Transverse colon (tissue), 4 donors: ENCODE measurements at regions of chr1 and their contacts with region 1.

Region 1: DNA sequence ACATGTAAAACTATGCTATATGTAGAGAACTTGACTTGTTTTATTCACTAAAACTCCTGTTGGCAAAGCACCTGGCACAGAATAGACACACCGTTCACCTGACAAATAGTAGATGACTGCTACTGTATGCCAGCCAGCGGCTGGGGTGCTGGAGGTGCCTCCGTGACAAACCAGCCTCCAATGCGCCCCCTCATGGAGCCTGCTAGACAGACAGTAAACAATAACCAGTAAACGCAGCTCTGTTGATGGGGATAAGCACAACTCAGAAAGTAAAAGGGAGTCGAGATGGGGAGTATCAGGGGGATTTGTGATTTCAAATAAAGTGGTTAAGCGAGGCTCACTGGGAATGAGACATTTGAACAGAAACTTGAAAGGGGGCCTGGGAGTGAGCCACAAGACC is 107.2 kb downstream of the PRDM2 start:
- DNase-seq: peak; percentile 52
- H3K4me3 ChIP-seq: no peak overlapping the region
- H3K27ac ChIP-seq: no peak overlapping the region
- H3K4me1 ChIP-seq: peaks cover 0 to 8% (median 0%) of the 10 kb centered on the region in 4 donors
- H3K27me3 ChIP-seq: no peaks in the 10 kb centered on the region
- CTCF ChIP-seq: peak in 4 of 5 experiments; percentile 6 to 30 (median 22)
- EP300 ChIP-seq: no peak
- POLR2A ChIP-seq: no peak

Region 2: DNA sequence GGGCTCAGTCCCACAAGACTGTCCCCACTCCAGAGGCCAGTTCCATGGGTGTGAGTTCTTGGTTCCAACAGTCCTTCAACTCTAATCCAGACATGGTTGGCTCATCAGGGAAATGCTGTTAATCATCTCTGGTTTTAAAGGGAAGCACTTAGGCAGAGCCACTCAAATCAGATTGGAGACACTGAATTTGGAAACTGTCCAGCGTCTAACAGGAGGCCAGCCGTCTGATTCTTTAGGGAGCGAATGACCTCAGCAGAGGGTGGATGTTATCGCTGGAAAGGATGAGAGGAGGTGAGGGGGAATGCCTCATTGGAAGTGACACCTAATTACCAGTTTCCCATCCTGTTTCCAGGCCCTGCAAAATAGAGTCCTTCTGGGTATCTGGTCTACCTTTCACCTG is 270.6 kb before region 1 on chr1:
- in situ Hi-C with region 1: no loop called
- intact Hi-C with region 1: no loop called
- DNase-seq: no peak
- H3K4me3 ChIP-seq: no peak overlapping the region
- H3K27ac ChIP-seq: no peak overlapping the region
- H3K4me1 ChIP-seq: no peaks in the 10 kb centered on the region
- H3K27me3 ChIP-seq: no peaks in the 10 kb centered on the region
- CTCF ChIP-seq: no peak
- EP300 ChIP-seq: no peak
- POLR2A ChIP-seq: no peak

Region 3: DNA sequence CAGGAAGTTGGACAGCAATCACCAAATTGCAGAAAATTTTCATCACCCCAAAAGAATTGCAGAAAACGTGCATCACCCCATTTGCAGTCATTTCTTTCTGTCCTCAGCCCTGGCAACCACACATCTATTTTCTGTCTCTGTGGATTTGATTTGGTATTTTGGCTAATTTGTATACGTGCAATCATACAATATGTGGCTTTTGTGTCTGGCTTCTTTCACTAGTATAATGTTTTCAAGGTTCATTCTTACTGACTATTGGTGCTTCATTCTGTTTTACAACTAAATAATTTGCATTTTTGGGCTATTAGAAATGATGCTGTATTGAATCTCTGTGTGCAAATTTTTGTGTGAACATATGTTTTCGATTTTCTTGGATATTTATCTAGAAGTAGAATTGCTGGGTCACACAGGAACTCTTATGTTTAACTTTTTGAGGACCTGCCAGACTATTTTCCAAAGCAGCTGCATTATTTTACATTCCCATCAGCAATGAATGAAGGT is 132.0 kb before region 1 on chr1:
- in situ Hi-C with region 1: loop called in 2 of 4 experiments (anchors 10 to 25 kb)
- intact Hi-C with region 1: no loop called
- DNase-seq: no peak
- H3K4me3 ChIP-seq: no peak overlapping the region
- H3K27ac ChIP-seq: no peak overlapping the region
- H3K4me1 ChIP-seq: no peaks in the 10 kb centered on the region
- H3K27me3 ChIP-seq: peaks cover 16% of the 10 kb centered on the region
- CTCF ChIP-seq: no peak
- EP300 ChIP-seq: no peak
- POLR2A ChIP-seq: no peak

Region 4: GRCh38 chr1:13832580-13832979 is 25.4 kb after region 1 on chr1:
- in situ Hi-C with region 1: no loop called
- intact Hi-C with region 1: no loop called
- DNase-seq: peak; percentile 59
- H3K4me3 ChIP-seq: no peak overlapping the region
- H3K27ac ChIP-seq: peak overlapping the region in 3 of 4 donors; percentile 9 to 65 (median 48)
- H3K4me1 ChIP-seq: peaks cover 0 to 22% (median 19%) of the 10 kb centered on the region in 4 donors
- H3K27me3 ChIP-seq: peaks cover 7% of the 10 kb centered on the region
- CTCF ChIP-seq: no peak
- EP300 ChIP-seq: no peak
- POLR2A ChIP-seq: no peak